ENCODE measurements at regions of chr9 and their contacts with region 1.

Region 1: GRCh38 chr9:70398145-70398556 is 16.3 kb downstream of the KLF9 start:
- DNase-seq: no peak
- ATAC-seq: no peak
- H3K4me3 ChIP-seq: no peak overlapping the region
- H3K27ac ChIP-seq: no peak overlapping the region
- H3K4me1 ChIP-seq: peaks cover 3 to 5% of the 10 kb centered on the region in 2 donors
- H3K27me3 ChIP-seq: no peaks in the 10 kb centered on the region

Region 2: DNA sequence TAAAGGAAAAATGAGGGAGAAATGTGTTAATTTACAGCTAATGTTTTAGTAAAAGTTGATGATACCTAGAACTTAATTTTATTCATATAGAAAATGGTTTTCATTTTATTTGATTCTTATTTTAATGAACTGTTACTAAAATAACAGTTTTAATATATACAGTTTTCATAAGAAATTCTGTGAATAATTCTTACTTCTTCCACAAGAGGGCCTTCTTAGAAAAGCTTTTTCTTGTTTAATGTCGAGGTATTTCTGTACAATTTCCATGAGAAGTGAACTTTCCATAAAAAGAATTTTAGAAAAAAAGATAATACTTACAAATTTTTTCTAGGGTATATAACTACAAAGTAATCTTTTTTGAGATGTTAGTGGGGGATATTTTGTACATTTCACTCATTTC is 57.6 kb before region 1 on chr9:
- intact Hi-C with region 1: loop called in 1 of 2 experiments (anchors 10 kb)
- DNase-seq: no peak
- ATAC-seq: no peak
- H3K4me3 ChIP-seq: no peak overlapping the region
- H3K27ac ChIP-seq: no peak overlapping the region
- H3K4me1 ChIP-seq: no peaks in the 10 kb centered on the region
- H3K27me3 ChIP-seq: no peaks in the 10 kb centered on the region

Region 3: DNA sequence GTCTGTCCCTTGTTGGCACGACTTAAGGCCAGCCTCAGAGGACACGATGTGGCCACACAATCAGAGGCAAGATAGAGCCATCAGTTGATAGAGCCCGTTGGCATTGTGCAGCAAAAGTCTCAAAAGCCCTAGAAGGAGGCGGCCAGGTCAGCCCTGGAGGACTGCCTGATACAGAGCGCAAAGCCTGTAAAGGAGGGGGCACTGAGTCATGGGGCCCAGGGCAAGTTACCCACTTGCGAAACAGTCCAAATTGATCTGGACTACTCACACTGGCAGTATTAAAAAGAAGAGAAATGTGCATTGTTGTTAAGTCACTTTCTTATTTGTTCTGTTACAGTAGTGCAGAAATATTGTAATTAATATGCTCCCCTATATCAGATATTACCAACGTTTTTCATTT is 35.2 kb before region 1 on chr9:
- intact Hi-C with region 1: loop called in 1 of 2 experiments (anchors 5 kb)
- DNase-seq: no peak
- ATAC-seq: no peak
- H3K4me3 ChIP-seq: no peak overlapping the region
- H3K27ac ChIP-seq: no peak overlapping the region
- H3K4me1 ChIP-seq: no peaks in the 10 kb centered on the region
- H3K27me3 ChIP-seq: no peaks in the 10 kb centered on the region

Region 4: DNA sequence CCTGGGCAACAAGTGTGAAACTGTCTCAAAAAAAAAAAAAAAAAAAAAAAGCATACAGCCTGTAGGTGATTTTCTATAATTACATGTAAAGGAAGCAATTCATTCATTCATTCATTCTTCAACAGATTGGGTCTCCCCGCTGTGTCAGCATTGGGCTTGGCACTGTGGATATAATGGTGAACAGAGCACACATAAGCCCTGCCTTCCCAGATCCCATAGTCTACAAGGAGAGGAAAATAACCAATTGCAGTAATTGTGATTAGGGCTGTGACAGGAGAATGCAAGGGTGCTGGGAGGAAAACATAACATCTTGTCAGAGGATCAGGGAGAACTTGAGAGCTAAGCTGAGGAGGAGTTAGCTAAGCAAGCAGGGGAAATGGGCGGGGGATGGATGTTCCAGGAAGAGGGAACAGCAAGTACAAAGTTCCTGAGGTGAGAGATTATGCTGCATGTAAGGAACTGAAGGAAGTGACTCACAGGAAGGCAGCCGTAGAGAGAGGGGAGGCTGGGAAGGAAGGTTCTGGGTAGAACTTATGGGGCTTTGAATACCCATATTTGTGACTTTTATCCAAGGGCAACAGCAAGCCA is 40.3 kb after region 1 on chr9:
- intact Hi-C with region 1: no loop called
- DNase-seq: peak in 1 of 2 donors; percentile 71
- ATAC-seq: peak; percentile 48
- H3K4me3 ChIP-seq: no peak overlapping the region
- H3K27ac ChIP-seq: no peak overlapping the region
- H3K4me1 ChIP-seq: peaks cover 0 to 6% of the 10 kb centered on the region in 2 donors
- H3K27me3 ChIP-seq: no peaks in the 10 kb centered on the region

Measured in aorta (tissue), 5 donors.